IMR-90 (cell line): ENCODE measurements at regions of chr12 and their contacts with region 1.

Region 1: DNA sequence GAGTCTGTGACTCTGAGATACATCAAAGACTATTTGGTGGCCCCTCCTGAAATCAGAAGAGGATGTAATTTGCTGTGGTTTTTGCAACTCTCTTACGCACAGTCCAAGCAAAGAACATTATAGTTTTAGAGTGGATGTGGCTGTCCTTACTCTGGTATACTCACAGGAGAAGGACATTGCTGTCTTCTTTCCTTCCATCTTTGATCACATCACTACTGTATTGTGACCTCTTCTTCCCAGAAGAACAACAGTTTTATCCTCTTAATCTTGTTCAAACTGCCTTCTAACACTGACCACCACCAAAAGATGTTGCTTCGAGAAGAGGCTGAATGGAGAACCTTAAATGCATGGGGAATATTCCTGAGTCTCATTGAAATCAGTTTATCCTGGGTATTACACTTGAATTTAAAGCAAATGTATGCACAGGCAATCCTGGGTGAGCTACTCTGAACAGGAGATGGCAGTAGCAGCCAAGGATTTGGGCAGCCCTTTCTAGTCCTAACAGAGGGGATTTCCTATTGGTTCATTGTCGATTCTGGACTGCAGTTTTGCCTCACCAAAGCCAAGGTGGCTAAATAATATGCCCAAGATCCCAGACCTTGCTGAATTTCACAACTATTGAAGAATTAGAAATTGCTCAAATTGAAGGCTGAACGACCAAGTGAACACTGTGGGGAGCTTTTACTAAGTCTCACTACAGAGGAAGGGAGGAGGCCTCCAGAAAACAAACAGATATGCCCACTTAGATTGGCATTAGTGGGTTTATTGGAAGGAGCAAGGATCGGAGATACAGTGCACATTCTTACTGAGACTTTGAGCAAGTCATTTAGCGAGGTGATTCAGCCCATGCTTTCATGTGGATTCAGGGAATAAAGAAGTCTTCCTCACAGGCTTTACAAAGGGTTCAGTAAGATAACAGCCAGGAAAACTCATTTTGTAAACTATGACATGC is 282.8 kb downstream of the PAWR start:
- DNase-seq: peak; percentile 91
- ATAC-seq: peak; percentile 91
- H3K4me3 ChIP-seq: no peak overlapping the region
- H3K27ac ChIP-seq: peak overlapping the region; percentile 45; the same call in 1 of the 2 replicates
- H3K4me1 ChIP-seq: peaks cover 14% of the 10 kb centered on the region
- H3K27me3 ChIP-seq: no peaks in the 10 kb centered on the region
- CTCF ChIP-seq: peak; percentile 97
- POLR2A ChIP-seq: peak; percentile 58; the same call in 1 of the 2 replicates
- RAD21 ChIP-seq: peak; percentile 96

Region 2: DNA sequence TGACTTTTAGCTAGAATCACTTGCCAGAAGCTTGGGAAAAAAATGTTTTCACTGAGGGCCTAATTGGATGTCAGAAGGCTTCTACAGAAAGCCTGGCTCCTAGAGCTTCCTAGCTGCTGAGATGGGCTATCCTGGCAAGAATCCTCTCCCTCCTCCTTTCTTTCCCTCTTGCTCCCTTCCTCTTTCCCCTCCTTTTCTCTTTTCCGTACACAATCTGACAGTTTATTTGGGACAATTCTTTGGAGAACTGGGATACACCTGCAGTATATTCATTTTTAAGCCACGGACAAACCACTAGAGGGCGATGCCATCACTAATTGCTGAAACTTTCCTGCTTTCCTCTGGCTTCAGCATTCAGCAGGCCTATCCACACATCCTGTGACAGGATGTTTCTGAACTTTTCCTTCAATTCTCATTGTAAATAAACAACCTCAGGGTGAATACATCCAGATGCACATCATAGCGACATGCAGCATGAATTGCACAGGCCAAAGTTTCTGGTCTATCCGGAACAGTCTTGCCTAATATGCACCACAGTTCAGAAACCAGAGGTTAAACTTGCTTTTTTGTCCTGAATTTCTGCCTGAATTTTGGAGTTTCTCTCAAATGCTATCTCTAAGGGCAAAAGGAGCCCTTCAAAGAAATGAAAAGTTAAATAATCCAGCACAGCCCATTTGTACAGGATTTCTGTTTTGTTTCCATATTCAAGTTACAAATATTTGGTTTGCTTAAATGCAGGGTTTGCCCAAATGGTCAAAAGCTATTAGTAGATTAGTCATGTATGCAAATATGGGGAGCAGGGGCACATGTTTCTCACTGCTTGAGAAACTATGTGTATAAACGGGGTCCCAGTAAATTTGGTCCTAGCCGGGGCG is 140.0 kb after region 1 on chr12:
- CTCF ChIA-PET with region 1: no interaction called
- POLR2A ChIA-PET with region 1: no interaction called
- dilution Hi-C with region 1: no loop called
- in situ Hi-C with region 1: loop called (anchors 5 kb)
- intact Hi-C with region 1: loop called (anchors 1 kb)
- DNase-seq: peak; percentile 83
- ATAC-seq: peak; percentile 68
- H3K4me3 ChIP-seq: no peak overlapping the region
- H3K27ac ChIP-seq: peak overlapping the region; percentile 67
- H3K4me1 ChIP-seq: peaks cover 19% of the 10 kb centered on the region
- H3K27me3 ChIP-seq: no peaks in the 10 kb centered on the region
- CTCF ChIP-seq: peak; percentile 68
- POLR2A ChIP-seq: no peak
- RAD21 ChIP-seq: peak; percentile 62

Region 3: DNA sequence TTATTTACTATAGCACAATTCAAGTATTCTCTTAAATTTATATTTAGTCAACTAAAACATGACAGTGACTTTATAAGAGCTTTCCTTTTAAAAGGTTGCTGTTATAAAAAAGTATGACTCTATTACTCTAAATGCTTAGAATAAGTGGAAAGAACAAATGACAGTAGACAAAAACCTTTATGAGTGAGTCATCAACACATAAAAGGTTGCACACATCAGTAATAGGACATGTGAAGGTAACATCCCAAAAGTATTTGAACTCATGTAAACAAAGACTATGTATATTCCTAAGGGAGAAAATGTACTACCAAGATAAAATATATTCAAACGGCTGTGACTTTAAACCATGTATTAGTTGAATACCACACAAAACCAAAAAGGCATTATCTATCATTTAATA is 184.0 kb after region 1 on chr12:
- CTCF ChIA-PET with region 1: no interaction called
- POLR2A ChIA-PET with region 1: no interaction called
- dilution Hi-C with region 1: no loop called
- in situ Hi-C with region 1: no loop called
- intact Hi-C with region 1: no loop called
- DNase-seq: peak; percentile 14
- ATAC-seq: no peak
- H3K4me3 ChIP-seq: no peak overlapping the region
- H3K27ac ChIP-seq: no peak overlapping the region
- H3K4me1 ChIP-seq: no peaks in the 10 kb centered on the region
- H3K27me3 ChIP-seq: no peaks in the 10 kb centered on the region
- CTCF ChIP-seq: no peak
- POLR2A ChIP-seq: no peak
- RAD21 ChIP-seq: no peak

Region 4: GRCh38 chr12:79737875-79738718 is 330.1 kb after region 1 on chr12:
- CTCF ChIA-PET with region 1: interaction called, 3 read pairs
- POLR2A ChIA-PET with region 1: no interaction called
- dilution Hi-C with region 1: no loop called
- in situ Hi-C with region 1: loop called (anchors 10 kb)
- intact Hi-C with region 1: loop called (anchors 1 kb)
- DNase-seq: peak; percentile 70
- ATAC-seq: peak; percentile 63
- H3K4me3 ChIP-seq: no peak overlapping the region
- H3K27ac ChIP-seq: no peak overlapping the region
- H3K4me1 ChIP-seq: no peaks in the 10 kb centered on the region
- H3K27me3 ChIP-seq: no peaks in the 10 kb centered on the region
- CTCF ChIP-seq: peak; percentile 70
- POLR2A ChIP-seq: no peak
- RAD21 ChIP-seq: peak; percentile 72

Region 5: DNA sequence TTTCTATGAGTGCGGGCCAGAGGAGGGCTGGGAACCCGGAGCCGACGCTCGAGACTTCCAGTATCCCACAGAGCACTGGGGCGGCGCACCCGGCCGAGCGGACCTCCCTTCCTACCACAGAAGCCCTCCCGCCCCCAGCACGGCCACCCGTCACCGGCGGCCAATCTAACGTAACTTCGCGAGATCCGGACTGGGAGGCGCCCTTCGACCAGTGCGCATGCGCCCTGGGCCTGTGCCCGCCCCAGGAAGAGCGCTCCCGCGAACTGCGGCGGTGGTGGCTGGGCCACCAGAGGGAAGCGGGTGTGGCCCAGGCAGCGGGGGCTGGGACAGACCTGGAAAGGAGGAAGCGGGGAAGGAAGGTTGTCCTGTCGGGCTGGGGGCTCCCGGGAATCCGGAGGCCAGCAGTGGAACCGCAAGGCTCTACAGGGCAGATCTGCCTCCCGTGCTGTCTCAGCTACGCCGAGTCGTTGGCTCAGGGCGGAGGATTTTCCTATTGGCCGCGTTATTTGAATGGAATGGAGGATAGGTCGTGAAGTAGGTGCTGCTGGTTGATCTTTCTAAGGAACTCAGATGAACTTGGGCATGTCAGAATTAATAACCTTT is 527.2 kb after region 1 on chr12 and contains the start of gene PPP1R12A:
- CTCF ChIA-PET with region 1: no interaction called
- POLR2A ChIA-PET with region 1: no interaction called
- dilution Hi-C with region 1: no loop called
- in situ Hi-C with region 1: loop called (anchors 25 kb)
- intact Hi-C with region 1: loop called (anchors 1 kb)
- DNase-seq: peak; percentile 97
- ATAC-seq: peak; percentile 94
- H3K4me3 ChIP-seq: peak within 1 kb of the TSS; percentile 93
- H3K27ac ChIP-seq: peak within 1 kb of the TSS; percentile 98
- H3K4me1 ChIP-seq: no peaks in the 10 kb centered on the region
- H3K27me3 ChIP-seq: no peaks in the 10 kb centered on the region
- CTCF ChIP-seq: no peak
- POLR2A ChIP-seq: peak; percentile 93
- RAD21 ChIP-seq: no peak
- total RNA-seq, gene PPP1R12A: 112 and 204 TPM in 2 replicates

Region 6: GRCh38 chr12:80269803-80270552 is 862.0 kb after region 1 on chr12:
- CTCF ChIA-PET with region 1: interaction called, 3 read pairs
- POLR2A ChIA-PET with region 1: no interaction called
- dilution Hi-C with region 1: no loop called
- in situ Hi-C with region 1: loop called (anchors 10 kb)
- intact Hi-C with region 1: loop called (anchors 1 kb)
- DNase-seq: peak; percentile 60
- ATAC-seq: peak; percentile 64
- H3K4me3 ChIP-seq: no peak overlapping the region
- H3K27ac ChIP-seq: no peak overlapping the region
- H3K4me1 ChIP-seq: peaks cover 4% of the 10 kb centered on the region
- H3K27me3 ChIP-seq: no peaks in the 10 kb centered on the region
- CTCF ChIP-seq: peak; percentile 70
- POLR2A ChIP-seq: no peak
- RAD21 ChIP-seq: peak; percentile 66

Region 7: GRCh38 chr12:80778005-80778541 is 1370.1 kb after region 1 on chr12:
- CTCF ChIA-PET with region 1: no interaction called
- POLR2A ChIA-PET with region 1: no interaction called
- dilution Hi-C with region 1: no loop called
- in situ Hi-C with region 1: loop called (anchors 25 kb)
- intact Hi-C with region 1: no loop called
- DNase-seq: peak; percentile 94
- ATAC-seq: peak; percentile 92
- H3K4me3 ChIP-seq: no peak overlapping the region
- H3K27ac ChIP-seq: peak overlapping the region; percentile 98
- H3K4me1 ChIP-seq: peaks cover 2% of the 10 kb centered on the region
- H3K27me3 ChIP-seq: no peaks in the 10 kb centered on the region
- CTCF ChIP-seq: no peak
- POLR2A ChIP-seq: no peak
- RAD21 ChIP-seq: no peak

Region 8: GRCh38 chr12:81128930-81129554 is 1721.1 kb after region 1 on chr12:
- CTCF ChIA-PET with region 1: no interaction called
- POLR2A ChIA-PET with region 1: no interaction called
- dilution Hi-C with region 1: no loop called
- in situ Hi-C with region 1: no loop called
- intact Hi-C with region 1: loop called (anchors 5 kb)
- DNase-seq: peak; percentile 43
- ATAC-seq: peak; percentile 87
- H3K4me3 ChIP-seq: no peak overlapping the region
- H3K27ac ChIP-seq: no peak overlapping the region
- H3K4me1 ChIP-seq: no peaks in the 10 kb centered on the region
- H3K27me3 ChIP-seq: no peaks in the 10 kb centered on the region
- CTCF ChIP-seq: peak; percentile 72
- POLR2A ChIP-seq: no peak
- RAD21 ChIP-seq: peak; percentile 47